PC-9 (cell line): ENCODE measurements at regions of chrX and their contacts with region 1.

Region 1: GRCh38 chrX:56033495-56034180 is 198.5 kb upstream of the KLF8 start:
- DNase-seq: peak in 1 of 2 experiments; percentile 81
- H3K4me3 ChIP-seq: no peak overlapping the region; the same call in 1 of the 2 replicates
- H3K27ac ChIP-seq: peak overlapping the region; percentile 40
- H3K4me1 ChIP-seq: peaks cover 47% of the 10 kb centered on the region
- H3K27me3 ChIP-seq: no peaks in the 10 kb centered on the region
- CTCF ChIP-seq: no peak

Region 2: GRCh38 chrX:56066016-56066415 is 32.4 kb after region 1 on chrX:
- CTCF ChIA-PET with region 1: interaction called, 3 read pairs
- POLR2A ChIA-PET with region 1: interaction called, 11 read pairs
- intact Hi-C with region 1: no loop called
- DNase-seq: no peak
- H3K4me3 ChIP-seq: no peak overlapping the region
- H3K27ac ChIP-seq: no peak overlapping the region
- H3K4me1 ChIP-seq: peaks cover 9% of the 10 kb centered on the region; the same call in 1 of the 2 replicates
- H3K27me3 ChIP-seq: no peaks in the 10 kb centered on the region
- CTCF ChIP-seq: no peak